B cell (primary cell): ENCODE measurements at regions of chr21 and their contacts with region 1.

Region 1: GRCh38 chr21:25881525-25882376 is 147.0 kb downstream of the GABPA start:
- DNase-seq: peak; percentile 69
- ATAC-seq: peak; percentile 86
- H3K4me3 ChIP-seq: no peak overlapping the region
- H3K4me3 Mint-ChIP-seq: no peak overlapping the region
- H3K27ac ChIP-seq: no peak overlapping the region
- H3K27ac Mint-ChIP-seq: no peak overlapping the region
- H3K4me1 ChIP-seq: no peaks in the 10 kb centered on the region
- H3K4me1 Mint-ChIP-seq: no peaks in the 10 kb centered on the region
- H3K27me3 ChIP-seq: no peaks in the 10 kb centered on the region
- H3K27me3 Mint-ChIP-seq: no peaks in the 10 kb centered on the region
- CTCF ChIP-seq: peak; percentile 99

Region 2: DNA sequence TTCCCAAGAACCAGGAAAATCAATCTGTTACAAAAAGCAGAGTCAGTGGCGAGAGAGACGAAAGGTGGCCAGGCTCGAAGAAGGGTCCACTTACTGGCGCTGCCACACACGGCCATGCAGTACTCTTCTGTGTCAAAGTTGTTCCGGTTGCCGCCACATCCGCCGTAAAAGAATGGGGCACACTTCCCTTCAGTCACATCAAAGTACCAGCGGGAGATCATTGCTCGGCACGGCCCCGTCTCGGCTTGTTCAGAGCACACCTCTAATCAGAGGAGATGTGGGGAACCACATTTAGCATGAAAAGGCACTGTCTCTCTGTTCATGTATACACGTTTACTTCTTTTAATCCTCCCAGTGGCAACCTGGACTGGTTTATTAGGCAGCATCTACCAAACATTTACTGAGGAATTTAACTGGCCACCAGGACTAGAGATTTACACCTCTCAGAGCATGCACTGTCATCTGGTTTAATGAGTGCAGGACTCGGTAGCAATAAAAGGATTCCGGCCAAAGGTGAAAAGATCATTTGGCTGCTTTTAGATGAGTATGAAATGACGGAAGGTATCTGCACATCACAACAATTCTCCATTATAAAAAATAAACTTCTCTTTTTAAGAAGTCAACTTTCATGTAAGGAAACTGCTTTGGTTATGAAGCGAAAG is 118.3 kb after region 1 on chr21:
- CTCF ChIA-PET with region 1: no interaction called
- POLR2A ChIA-PET with region 1: no interaction called
- intact Hi-C with region 1: loop called (anchors 1 kb)
- DNase-seq: peak; percentile 13
- ATAC-seq: no peak
- H3K4me3 ChIP-seq: peak overlapping the region in 1 of 5 experiments; percentile 21
- H3K4me3 Mint-ChIP-seq: peak overlapping the region; percentile 59
- H3K27ac ChIP-seq: no peak overlapping the region
- H3K27ac Mint-ChIP-seq: no peak overlapping the region
- H3K4me1 ChIP-seq: no peaks in the 10 kb centered on the region
- H3K4me1 Mint-ChIP-seq: peaks cover 8% of the 10 kb centered on the region
- H3K27me3 ChIP-seq: no peaks in the 10 kb centered on the region
- H3K27me3 Mint-ChIP-seq: no peaks in the 10 kb centered on the region
- CTCF ChIP-seq: no peak